HEK293T (cell line): ENCODE measurements at regions of chr2 and their contacts with region 1.

Region 1: GRCh38 chr2:126664234-126664633 is 8.3 kb downstream of the GYPC start:
- DNase-seq: no peak

Region 2: GRCh38 chr2:126642031-126642430 is 22.2 kb before region 1 on chr2:
- CTCF ChIA-PET with region 1: interaction called, 13 read pairs
- POLR2A ChIA-PET with region 1: no interaction called
- DNase-seq: no peak